ENCODE measurements at regions of chr11 and their contacts with region 1.

Region 1: GRCh38 chr11:122642472-122642922 is 13.0 kb upstream of the UBASH3B start:
- DNase-seq: peak; percentile 82 to 95
- ATAC-seq: peak; percentile 95 to 96
- H3K4me3 ChIP-seq: peak overlapping the region; percentile 24
- H3K27ac ChIP-seq: peak overlapping the region; percentile 92 to 97
- H3K4me1 ChIP-seq: peaks cover 49% of the 10 kb centered on the region
- CTCF ChIP-seq: no peak
- EP300 ChIP-seq: peak; percentile 81 to 84
- POLR2A ChIP-seq: no peak
- RAD21 ChIP-seq: peak; percentile 8 to 37; a peak in 1 of 5 replicates

Region 2: DNA sequence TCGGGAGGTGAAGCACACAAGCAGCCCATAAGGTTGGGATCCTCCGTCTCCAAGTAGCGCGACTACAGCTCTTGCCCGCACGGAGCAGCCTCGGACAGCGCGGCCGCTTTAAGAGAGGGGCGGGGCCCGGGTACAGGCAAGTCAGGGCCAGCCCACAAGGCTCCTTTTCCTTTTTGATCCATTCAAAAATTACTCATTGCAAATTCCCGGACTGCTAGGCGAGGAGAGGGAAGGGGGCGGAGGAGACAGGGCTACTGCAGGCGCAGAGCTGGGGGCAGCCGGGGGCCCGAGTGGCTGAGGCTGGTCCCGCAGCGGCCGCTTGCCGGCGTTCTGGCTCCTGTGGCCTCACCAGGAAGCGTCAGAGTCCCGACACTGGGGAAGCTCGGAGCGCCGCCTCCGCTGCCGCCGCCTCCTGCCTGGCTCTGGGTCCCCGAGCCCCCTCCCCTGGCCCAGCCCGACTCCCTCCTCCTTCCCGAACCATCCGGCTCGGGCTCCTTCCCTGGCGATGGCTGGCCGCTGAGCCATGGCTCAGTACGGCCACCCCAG is 13.1 kb after region 1 on chr11 and contains the start of gene UBASH3B:
- CTCF ChIA-PET with region 1: interaction called, 7 read pairs
- POLR2A ChIA-PET with region 1: interaction called, 42 read pairs
- DNase-seq: peak; percentile 67 to 84
- ATAC-seq: peak; percentile 83 to 91
- H3K4me3 ChIP-seq: peak within 1 kb of the TSS; percentile 77
- H3K27ac ChIP-seq: peak within 1 kb of the TSS; percentile 91 to 99
- H3K4me1 ChIP-seq: peaks cover 51% of the 10 kb centered on the region
- CTCF ChIP-seq: no peak
- EP300 ChIP-seq: no peak
- POLR2A ChIP-seq: peak; percentile 77
- RAD21 ChIP-seq: no peak; a peak in 1 of 5 replicates
- polyA plus RNA-seq, gene UBASH3B: 43.0 and 52.2 TPM in 2 replicates